Naive thymus-derived CD4-positive, alpha-beta T cell (primary cell): ENCODE measurements at regions of chr17 and their contacts with region 1.

Region 1: DNA sequence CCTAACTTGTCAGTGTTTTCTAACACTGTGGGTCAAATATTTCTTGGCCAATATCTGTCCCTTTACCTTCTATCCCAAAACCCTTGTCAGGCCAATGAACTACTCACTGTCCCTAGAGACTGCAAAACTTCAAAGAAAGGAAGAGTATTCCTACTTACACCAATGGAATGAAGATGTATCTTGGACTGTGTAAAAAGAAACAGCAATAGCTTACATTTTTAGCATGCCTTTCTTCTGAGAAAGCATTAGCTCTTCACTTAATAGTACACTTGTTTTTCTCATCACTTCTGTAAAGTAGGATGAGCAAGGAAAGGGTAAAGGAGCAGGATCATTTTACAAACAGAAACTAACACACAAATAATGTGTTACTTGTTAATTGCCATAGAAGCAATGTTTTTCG is 73.9 kb downstream of the STH start:
- DNase-seq: no peak
- ATAC-seq: no peak
- H3K4me3 ChIP-seq: no peak overlapping the region
- H3K4me3 Mint-ChIP-seq: no peak overlapping the region
- H3K27ac ChIP-seq: peak overlapping the region; percentile 27
- H3K27ac Mint-ChIP-seq: peak overlapping the region in 4 of 9 donors; percentile 6 to 76 (median 58)
- H3K4me1 ChIP-seq: peaks cover 0 to 4% of the 10 kb centered on the region in 2 donors
- H3K4me1 Mint-ChIP-seq: peaks cover 14 to 68% (median 56%) of the 10 kb centered on the region in 7 donors
- H3K27me3 ChIP-seq: no peaks in the 10 kb centered on the region
- H3K27me3 Mint-ChIP-seq: no peaks in the 10 kb centered on the region

Region 2: DNA sequence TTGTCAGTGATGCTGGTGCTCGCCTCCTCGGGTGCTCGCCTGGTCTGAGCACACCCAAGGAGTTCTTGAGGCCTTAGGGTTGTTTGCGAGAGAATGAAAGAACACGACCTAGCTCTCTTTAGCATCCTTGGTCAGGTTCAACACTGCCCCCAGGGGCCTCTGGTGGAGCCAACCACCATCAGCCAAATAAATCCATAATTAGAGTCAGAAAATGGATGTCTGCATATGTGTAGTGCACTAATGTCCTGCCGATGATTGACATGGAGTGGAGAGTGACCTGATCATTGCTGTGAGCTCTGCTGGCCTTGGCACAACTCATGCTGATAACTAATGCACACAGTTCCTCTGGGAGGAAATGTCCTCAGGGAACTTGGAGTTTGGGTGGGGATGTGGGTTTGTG is 82.1 kb before region 1 on chr17:
- CTCF ChIA-PET with region 1: no interaction called
- POLR2A ChIA-PET with region 1: no interaction called
- intact Hi-C with region 1: no loop called
- DNase-seq: no peak
- ATAC-seq: no peak
- H3K4me3 ChIP-seq: no peak overlapping the region
- H3K4me3 Mint-ChIP-seq: no peak overlapping the region
- H3K27ac ChIP-seq: no peak overlapping the region
- H3K27ac Mint-ChIP-seq: no peak overlapping the region
- H3K4me1 ChIP-seq: no peaks in the 10 kb centered on the region
- H3K4me1 Mint-ChIP-seq: no peaks in the 10 kb centered on the region
- H3K27me3 ChIP-seq: no peaks in the 10 kb centered on the region
- H3K27me3 Mint-ChIP-seq: peaks cover 0 to 4% (median 0%) of the 10 kb centered on the region in 5 donors

Region 3: GRCh38 chr17:46061435-46061834 is 11.6 kb before region 1 on chr17:
- CTCF ChIA-PET with region 1: interaction called, 4 read pairs
- POLR2A ChIA-PET with region 1: interaction called, 3 read pairs
- intact Hi-C with region 1: loop called in 1 of 2 experiments (anchors 2 kb)
- DNase-seq: no peak
- ATAC-seq: peak; percentile 41
- H3K4me3 ChIP-seq: no peak overlapping the region
- H3K4me3 Mint-ChIP-seq: no peak overlapping the region
- H3K27ac ChIP-seq: no peak overlapping the region
- H3K27ac Mint-ChIP-seq: peak overlapping the region in 4 of 9 donors; percentile 22 to 69 (median 44)
- H3K4me1 ChIP-seq: no peaks in the 10 kb centered on the region
- H3K4me1 Mint-ChIP-seq: peaks cover 1 to 59% (median 39%) of the 10 kb centered on the region in 7 donors
- H3K27me3 ChIP-seq: no peaks in the 10 kb centered on the region
- H3K27me3 Mint-ChIP-seq: no peaks in the 10 kb centered on the region

Region 4: DNA sequence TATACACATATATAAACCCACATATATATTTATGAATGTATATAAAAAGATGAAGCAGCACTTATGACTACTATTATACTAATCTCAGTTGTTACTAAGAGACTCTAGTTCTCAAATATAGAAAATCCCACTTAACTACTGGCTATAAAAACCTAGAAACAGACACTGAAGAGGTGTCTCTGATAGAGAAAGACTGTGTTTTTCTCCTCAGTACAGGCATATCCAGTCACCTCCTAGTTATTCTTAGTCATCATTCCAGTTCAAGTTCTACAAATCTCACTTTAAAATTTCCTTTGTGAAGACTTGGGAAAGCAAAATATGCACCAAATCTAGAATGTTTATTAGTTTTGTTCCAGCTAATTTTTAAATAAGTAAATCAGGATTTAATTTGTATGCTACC is 20.0 kb after region 1 on chr17:
- CTCF ChIA-PET with region 1: no interaction called
- POLR2A ChIA-PET with region 1: no interaction called
- intact Hi-C with region 1: no loop called
- DNase-seq: no peak
- ATAC-seq: no peak
- H3K4me3 ChIP-seq: no peak overlapping the region
- H3K4me3 Mint-ChIP-seq: no peak overlapping the region
- H3K27ac ChIP-seq: no peak overlapping the region
- H3K27ac Mint-ChIP-seq: no peak overlapping the region
- H3K4me1 ChIP-seq: peaks cover 14 to 15% of the 10 kb centered on the region in 2 donors
- H3K4me1 Mint-ChIP-seq: peaks cover 42 to 82% (median 73%) of the 10 kb centered on the region in 7 donors
- H3K27me3 ChIP-seq: no peaks in the 10 kb centered on the region
- H3K27me3 Mint-ChIP-seq: no peaks in the 10 kb centered on the region

Region 5: DNA sequence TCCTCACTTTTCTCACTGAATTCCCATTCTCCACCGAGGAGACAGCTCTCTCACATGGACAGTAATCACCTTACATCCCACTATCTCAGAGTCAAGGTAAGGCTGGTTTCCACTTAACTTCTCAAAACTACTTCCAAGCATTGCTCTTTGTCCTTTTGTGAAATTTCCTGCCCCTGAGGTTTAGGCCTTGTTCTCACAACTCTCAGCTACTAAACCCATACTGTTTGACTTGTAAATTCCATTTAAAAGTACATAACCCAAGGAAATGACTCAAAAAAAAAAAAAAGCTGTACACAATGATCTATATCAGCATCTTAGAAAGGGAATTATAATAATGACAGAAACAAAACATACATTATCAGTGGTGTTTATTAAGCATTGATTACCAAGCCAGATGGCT is 1107.3 kb after region 1 on chr17:
- CTCF ChIA-PET with region 1: no interaction called
- POLR2A ChIA-PET with region 1: no interaction called
- intact Hi-C with region 1: no loop called
- DNase-seq: no peak
- ATAC-seq: no peak
- H3K4me3 ChIP-seq: no peak overlapping the region
- H3K4me3 Mint-ChIP-seq: no peak overlapping the region
- H3K27ac ChIP-seq: no peak overlapping the region
- H3K27ac Mint-ChIP-seq: no peak overlapping the region
- H3K4me1 ChIP-seq: peaks cover 6 to 13% of the 10 kb centered on the region in 2 donors
- H3K4me1 Mint-ChIP-seq: peaks cover 37 to 75% (median 67%) of the 10 kb centered on the region in 7 donors
- H3K27me3 ChIP-seq: no peaks in the 10 kb centered on the region
- H3K27me3 Mint-ChIP-seq: no peaks in the 10 kb centered on the region